Activated naive CD4-positive, alpha-beta T cell treated with anti-CD3 and anti-CD28 coated beads for 36 hours (primary cell): ENCODE measurements at regions of chr11 and their contacts with region 1.

Region 1: DNA sequence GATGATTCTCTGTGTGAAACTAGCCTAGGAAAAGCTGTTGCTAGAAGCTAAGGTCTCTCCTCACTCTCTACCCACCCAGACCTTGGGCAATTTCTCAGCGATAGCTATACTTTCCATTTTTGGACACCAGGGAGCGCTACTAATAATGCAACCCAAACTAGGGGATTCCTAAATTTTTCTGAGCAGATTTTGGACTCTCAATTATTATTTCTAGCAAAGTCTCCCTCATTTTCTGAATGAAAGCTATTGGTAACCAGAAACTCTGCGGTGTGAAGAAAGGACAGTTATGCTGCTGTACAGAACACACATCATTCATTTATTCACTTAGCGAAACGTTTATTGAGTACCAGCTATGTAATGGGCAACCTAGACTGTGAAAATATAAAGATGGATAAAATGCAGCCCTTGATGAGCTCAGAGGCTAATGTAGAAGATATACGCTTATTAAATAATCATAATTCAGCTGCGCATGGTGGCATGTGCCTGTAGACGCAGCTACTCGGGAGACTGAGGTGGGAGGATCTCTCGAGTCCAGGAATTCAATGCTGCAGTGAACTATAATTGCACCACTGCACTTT is 6.1 kb upstream of the STIM1 start:
- DNase-seq: peak; percentile 67
- H3K4me3 Mint-ChIP-seq: no peak overlapping the region
- H3K27ac Mint-ChIP-seq: no peak overlapping the region
- H3K4me1 Mint-ChIP-seq: peaks cover 45% of the 10 kb centered on the region
- H3K27me3 Mint-ChIP-seq: no peaks in the 10 kb centered on the region

Region 2: GRCh38 chr11:3867209-3868091 is 18.1 kb after region 1 on chr11:
- CTCF ChIA-PET with region 1: interaction called, 95 read pairs
- intact Hi-C with region 1: no loop called
- DNase-seq: peak; percentile 70
- H3K4me3 Mint-ChIP-seq: peak overlapping the region; percentile 36
- H3K27ac Mint-ChIP-seq: peak overlapping the region; percentile 87
- H3K4me1 Mint-ChIP-seq: peaks cover 81% of the 10 kb centered on the region
- H3K27me3 Mint-ChIP-seq: no peaks in the 10 kb centered on the region

Region 3: DNA sequence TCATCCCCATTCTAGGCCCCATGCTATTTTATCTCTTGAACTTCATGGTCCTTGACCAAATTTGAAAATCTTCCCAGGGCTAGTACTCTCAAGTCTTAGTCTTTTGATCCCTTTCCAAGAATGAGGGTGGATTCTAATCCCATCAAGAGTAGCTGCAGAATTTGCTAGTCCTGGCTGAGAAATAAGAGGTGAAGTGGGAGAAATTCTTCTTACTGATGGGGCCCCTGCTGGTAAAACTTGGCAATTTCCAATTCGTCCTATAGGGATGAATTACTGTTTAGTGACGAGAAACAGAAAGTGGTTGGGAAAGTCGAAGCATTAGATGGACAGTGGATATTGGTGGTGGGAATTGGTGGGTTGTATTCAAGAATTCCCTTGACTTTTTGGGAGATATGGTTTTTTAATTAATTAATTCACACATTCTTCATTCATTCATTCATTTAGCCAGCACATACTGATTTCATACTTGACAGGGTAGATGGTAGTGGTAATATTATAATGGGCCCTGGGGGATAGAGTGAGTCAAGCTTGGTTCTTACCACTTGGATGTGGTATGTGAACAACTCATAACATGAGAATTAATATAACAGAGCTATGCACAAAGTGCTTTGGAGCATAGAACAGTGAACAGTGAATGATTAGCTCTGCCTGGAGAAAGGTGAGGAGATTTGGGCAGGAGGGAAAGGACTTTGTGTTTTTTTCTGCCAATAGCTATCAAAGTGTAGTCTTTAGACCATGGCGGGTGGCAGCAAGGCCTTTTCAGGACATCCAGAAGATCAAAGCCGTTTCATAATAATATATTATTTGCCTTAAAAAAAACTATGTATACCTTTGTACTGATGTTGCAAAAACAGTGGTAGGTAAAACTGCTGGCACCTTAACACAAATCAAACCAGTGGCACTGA is 109.9 kb after region 1 on chr11:
- CTCF ChIA-PET with region 1: interaction called, 17 read pairs
- intact Hi-C with region 1: no loop called
- DNase-seq: no peak
- H3K4me3 Mint-ChIP-seq: no peak overlapping the region
- H3K27ac Mint-ChIP-seq: no peak overlapping the region
- H3K4me1 Mint-ChIP-seq: peaks cover 79% of the 10 kb centered on the region
- H3K27me3 Mint-ChIP-seq: no peaks in the 10 kb centered on the region

Region 4: GRCh38 chr11:3971756-3972404 is 122.5 kb after region 1 on chr11:
- CTCF ChIA-PET with region 1: interaction called, 26 read pairs
- intact Hi-C with region 1: loop called (anchors 1 kb)
- DNase-seq: no peak
- H3K4me3 Mint-ChIP-seq: no peak overlapping the region
- H3K27ac Mint-ChIP-seq: no peak overlapping the region
- H3K4me1 Mint-ChIP-seq: peaks cover 68% of the 10 kb centered on the region
- H3K27me3 Mint-ChIP-seq: no peaks in the 10 kb centered on the region

Region 5: GRCh38 chr11:3984896-3985295 is 135.5 kb after region 1 on chr11:
- CTCF ChIA-PET with region 1: interaction called, 32 read pairs
- intact Hi-C with region 1: loop called (anchors 1 kb)
- DNase-seq: peak; percentile 80
- H3K4me3 Mint-ChIP-seq: no peak overlapping the region
- H3K27ac Mint-ChIP-seq: peak overlapping the region; percentile 55
- H3K4me1 Mint-ChIP-seq: peaks cover 74% of the 10 kb centered on the region
- H3K27me3 Mint-ChIP-seq: no peaks in the 10 kb centered on the region

Region 6: GRCh38 chr11:4006946-4007680 is 157.7 kb after region 1 on chr11:
- CTCF ChIA-PET with region 1: interaction called, 12 read pairs
- intact Hi-C with region 1: no loop called
- DNase-seq: no peak
- H3K4me3 Mint-ChIP-seq: no peak overlapping the region
- H3K27ac Mint-ChIP-seq: no peak overlapping the region
- H3K4me1 Mint-ChIP-seq: peaks cover 21% of the 10 kb centered on the region
- H3K27me3 Mint-ChIP-seq: no peaks in the 10 kb centered on the region

Region 7: GRCh38 chr11:4156571-4156970 is 307.2 kb after region 1 on chr11:
- CTCF ChIA-PET with region 1: no interaction called
- intact Hi-C with region 1: no loop called
- DNase-seq: no peak
- H3K4me3 Mint-ChIP-seq: no peak overlapping the region
- H3K27ac Mint-ChIP-seq: no peak overlapping the region
- H3K4me1 Mint-ChIP-seq: no peaks in the 10 kb centered on the region
- H3K27me3 Mint-ChIP-seq: no peaks in the 10 kb centered on the region

Region 8: DNA sequence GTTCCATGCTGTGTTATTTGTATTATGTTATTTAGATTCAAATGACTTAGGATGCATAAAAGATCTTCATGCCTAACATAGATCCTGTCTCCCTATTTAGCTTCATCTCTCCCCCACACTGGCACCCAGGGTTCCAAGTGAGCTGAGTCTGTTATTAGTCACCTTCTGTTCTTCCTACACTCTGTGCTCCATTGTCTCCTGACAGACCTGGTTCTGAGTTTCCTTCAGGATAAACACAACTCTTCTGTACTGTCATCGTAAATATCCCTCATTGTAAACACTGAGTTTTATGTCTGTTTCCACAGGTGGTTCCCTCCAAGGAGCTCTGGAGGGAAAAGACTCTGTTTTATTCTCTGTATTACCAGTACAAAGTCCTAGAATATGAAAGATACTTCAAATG is 863.9 kb after region 1 on chr11:
- CTCF ChIA-PET with region 1: no interaction called
- intact Hi-C with region 1: no loop called
- DNase-seq: no peak
- H3K4me3 Mint-ChIP-seq: no peak overlapping the region
- H3K27ac Mint-ChIP-seq: no peak overlapping the region
- H3K4me1 Mint-ChIP-seq: no peaks in the 10 kb centered on the region
- H3K27me3 Mint-ChIP-seq: peaks cover 15% of the 10 kb centered on the region